Right ventricle myocardium superior (tissue), 1 donor: ENCODE measurements at regions of chr9 and their contacts with region 1.

Region 1: DNA sequence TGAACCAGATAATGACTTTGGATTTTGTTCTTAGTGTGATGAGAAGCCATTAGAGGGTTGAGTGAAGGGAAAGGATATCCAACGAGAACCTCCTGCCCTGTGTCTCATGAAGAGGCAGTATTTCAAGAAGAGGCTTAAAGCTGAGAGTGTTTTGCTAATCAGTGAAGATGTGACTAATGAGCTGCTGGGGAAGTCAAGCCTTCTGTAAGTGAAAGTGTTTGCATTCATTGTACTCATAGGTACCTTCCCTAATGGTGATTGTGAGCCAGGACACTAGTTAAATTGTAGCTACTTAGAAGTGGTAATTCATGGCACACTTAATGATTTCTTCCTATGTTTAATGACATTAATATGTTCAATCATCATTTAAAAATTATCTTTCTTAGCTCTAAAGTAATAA is 23.7 kb downstream of the PIP5K1B start:
- DNase-seq: no peak
- ATAC-seq: no peak

Region 2: GRCh38 chr9:68894502-68894901 is 165.8 kb after region 1 on chr9:
- intact Hi-C with region 1: no loop called
- DNase-seq: no peak
- ATAC-seq: no peak

Region 3: GRCh38 chr9:68949271-68950000 is 220.7 kb after region 1 on chr9:
- intact Hi-C with region 1: loop called (anchors 10 kb)
- DNase-seq: peak; percentile 51
- ATAC-seq: peak; percentile 67